CD14-positive monocyte (primary cell): ENCODE measurements at regions of chr21 and their contacts with region 1.

Region 1: DNA sequence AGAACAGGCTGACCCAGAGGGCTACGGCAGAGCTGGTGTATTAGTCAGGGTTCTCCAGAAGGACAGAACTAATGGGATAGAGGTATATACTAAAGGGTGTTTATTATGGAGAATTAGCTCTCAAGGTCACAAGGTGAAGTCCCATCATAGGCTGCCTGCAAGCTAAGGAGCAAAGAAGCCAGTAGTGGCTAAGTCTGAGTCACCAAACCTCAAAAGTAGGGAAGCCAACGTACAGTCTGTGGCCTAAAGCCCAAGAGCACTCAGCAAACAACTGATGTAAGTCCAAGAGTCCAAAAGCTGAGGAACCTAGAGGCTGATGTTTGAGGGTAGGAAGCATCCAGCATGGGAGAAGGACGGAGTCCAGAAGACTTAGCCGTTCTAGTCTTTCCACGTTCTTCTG is 179.2 kb downstream of the BACH1 start:
- DNase-seq: no peak
- H3K4me3 ChIP-seq: no peak overlapping the region
- H3K4me3 Mint-ChIP-seq: no peak overlapping the region
- H3K27ac ChIP-seq: no peak overlapping the region
- H3K27ac Mint-ChIP-seq: peak overlapping the region in 2 of 7 donors; percentile 15 to 43
- H3K4me1 ChIP-seq: peaks cover 0 to 2% of the 10 kb centered on the region in 2 donors
- H3K4me1 Mint-ChIP-seq: peaks cover 16% of the 10 kb centered on the region
- H3K27me3 ChIP-seq: no peaks in the 10 kb centered on the region
- H3K27me3 Mint-ChIP-seq: peaks cover 1 to 3% (median 2%) of the 10 kb centered on the region in 3 donors
- CTCF ChIP-seq: no peak

Region 2: DNA sequence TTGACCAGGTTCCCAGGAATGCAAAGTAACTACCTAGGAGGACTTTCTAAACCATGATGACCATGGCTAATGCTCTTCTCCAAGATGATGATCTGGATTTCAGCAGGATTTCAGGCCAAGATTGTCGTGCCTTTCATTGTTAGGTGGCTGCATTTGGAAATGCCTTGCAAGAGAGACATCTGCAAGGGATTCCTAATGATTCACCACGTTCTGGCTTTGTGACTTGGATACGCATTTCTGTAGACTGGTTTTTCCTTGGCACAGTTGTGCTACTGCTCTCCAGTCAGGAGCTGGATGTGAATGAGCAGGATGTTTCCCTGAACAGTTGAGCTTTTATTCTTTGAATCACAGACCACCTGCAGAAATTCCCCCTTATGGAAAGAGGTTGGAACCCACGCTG is 33.2 kb after region 1 on chr21:
- intact Hi-C with region 1: no loop called
- DNase-seq: no peak
- H3K4me3 ChIP-seq: no peak overlapping the region
- H3K4me3 Mint-ChIP-seq: no peak overlapping the region
- H3K27ac ChIP-seq: no peak overlapping the region
- H3K27ac Mint-ChIP-seq: no peak overlapping the region
- H3K4me1 ChIP-seq: no peaks in the 10 kb centered on the region
- H3K4me1 Mint-ChIP-seq: no peaks in the 10 kb centered on the region
- H3K27me3 ChIP-seq: no peaks in the 10 kb centered on the region
- H3K27me3 Mint-ChIP-seq: peaks cover 0 to 2% (median 0%) of the 10 kb centered on the region in 3 donors
- CTCF ChIP-seq: no peak

Region 3: GRCh38 chr21:29849735-29850176 is 371.8 kb after region 1 on chr21:
- intact Hi-C with region 1: loop called (anchors 2 kb)
- DNase-seq: peak; percentile 42 to 59 (median 55)
- H3K4me3 ChIP-seq: no peak overlapping the region
- H3K4me3 Mint-ChIP-seq: no peak overlapping the region
- H3K27ac ChIP-seq: no peak overlapping the region
- H3K27ac Mint-ChIP-seq: no peak overlapping the region
- H3K4me1 ChIP-seq: no peaks in the 10 kb centered on the region
- H3K4me1 Mint-ChIP-seq: peaks cover 5% of the 10 kb centered on the region
- H3K27me3 ChIP-seq: no peaks in the 10 kb centered on the region
- H3K27me3 Mint-ChIP-seq: peaks cover 1 to 3% (median 1%) of the 10 kb centered on the region in 3 donors
- CTCF ChIP-seq: peak; percentile 80

Region 4: DNA sequence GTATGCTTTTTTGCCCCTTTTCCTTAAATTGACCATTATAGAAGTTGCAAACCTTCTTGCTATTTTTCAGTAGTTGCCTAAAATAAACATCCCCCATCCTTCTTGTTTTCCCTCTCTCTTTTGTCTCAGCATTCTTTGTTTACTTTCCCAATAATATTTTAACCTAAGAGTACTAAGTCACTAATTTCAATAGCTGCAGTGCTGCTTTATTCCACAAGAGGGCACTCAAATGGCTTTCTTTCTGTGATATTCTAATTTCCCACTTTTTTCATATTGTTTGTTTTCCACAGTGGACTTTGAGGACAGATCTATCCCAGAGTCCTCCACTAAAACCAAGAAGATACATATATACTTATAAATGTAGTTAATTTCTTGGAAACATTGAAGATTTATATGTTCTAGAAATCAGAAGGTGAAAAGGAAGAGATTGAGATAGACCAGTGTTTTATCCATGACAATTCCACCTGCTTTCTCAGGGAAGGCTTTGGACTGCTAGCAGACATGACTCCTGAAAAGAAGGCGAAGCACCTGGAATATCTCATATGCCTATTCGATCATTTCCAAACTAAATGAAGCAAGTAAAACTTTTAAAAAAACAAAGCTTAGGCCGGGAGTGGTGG is 566.6 kb after region 1 on chr21:
- intact Hi-C with region 1: loop called in 1 of 2 experiments (anchors 10 kb)
- DNase-seq: peak in 1 of 3 donors; percentile 5
- H3K4me3 ChIP-seq: no peak overlapping the region
- H3K4me3 Mint-ChIP-seq: no peak overlapping the region
- H3K27ac ChIP-seq: no peak overlapping the region
- H3K27ac Mint-ChIP-seq: no peak overlapping the region
- H3K4me1 ChIP-seq: no peaks in the 10 kb centered on the region
- H3K4me1 Mint-ChIP-seq: no peaks in the 10 kb centered on the region
- H3K27me3 ChIP-seq: no peaks in the 10 kb centered on the region
- H3K27me3 Mint-ChIP-seq: no peaks in the 10 kb centered on the region
- CTCF ChIP-seq: peak; percentile 86